Activated B cell treated with CpG ODN at 0.5 μM for 24 hours (primary cell): ENCODE measurements at regions of chr12 and their contacts with region 1.

Region 1: GRCh38 chr12:76763743-76764675 is at the start of gene ZDHHC17:
- DNase-seq: peak; percentile 96
- ATAC-seq: peak; percentile 87
- H3K4me3 Mint-ChIP-seq: peak within 1 kb of the TSS; percentile 97
- H3K27ac Mint-ChIP-seq: peak within 1 kb of the TSS; percentile 96
- H3K4me1 Mint-ChIP-seq: peaks cover 44% of the 10 kb centered on the region
- H3K27me3 Mint-ChIP-seq: no peaks in the 10 kb centered on the region
- CTCF ChIP-seq: no peak
- total RNA-seq, gene ZDHHC17: 51.8 and 70.8 TPM in 2 replicates

Region 2: GRCh38 chr12:75480469-75480949 is 1283.5 kb before region 1 on chr12 and contains the start of gene GLIPR1:
- CTCF ChIA-PET with region 1: no interaction called
- POLR2A ChIA-PET with region 1: interaction called, 3 read pairs
- intact Hi-C with region 1: loop called (anchors 5 kb)
- DNase-seq: peak; percentile 40
- ATAC-seq: peak; percentile 79
- H3K4me3 Mint-ChIP-seq: peak within 1 kb of the TSS; percentile 96
- H3K27ac Mint-ChIP-seq: peak within 1 kb of the TSS; percentile 97
- H3K4me1 Mint-ChIP-seq: peaks cover 96% of the 10 kb centered on the region
- H3K27me3 Mint-ChIP-seq: no peaks in the 10 kb centered on the region
- CTCF ChIP-seq: no peak
- total RNA-seq, gene GLIPR1: 44.7 and 45.4 TPM in 2 replicates

Region 3: DNA sequence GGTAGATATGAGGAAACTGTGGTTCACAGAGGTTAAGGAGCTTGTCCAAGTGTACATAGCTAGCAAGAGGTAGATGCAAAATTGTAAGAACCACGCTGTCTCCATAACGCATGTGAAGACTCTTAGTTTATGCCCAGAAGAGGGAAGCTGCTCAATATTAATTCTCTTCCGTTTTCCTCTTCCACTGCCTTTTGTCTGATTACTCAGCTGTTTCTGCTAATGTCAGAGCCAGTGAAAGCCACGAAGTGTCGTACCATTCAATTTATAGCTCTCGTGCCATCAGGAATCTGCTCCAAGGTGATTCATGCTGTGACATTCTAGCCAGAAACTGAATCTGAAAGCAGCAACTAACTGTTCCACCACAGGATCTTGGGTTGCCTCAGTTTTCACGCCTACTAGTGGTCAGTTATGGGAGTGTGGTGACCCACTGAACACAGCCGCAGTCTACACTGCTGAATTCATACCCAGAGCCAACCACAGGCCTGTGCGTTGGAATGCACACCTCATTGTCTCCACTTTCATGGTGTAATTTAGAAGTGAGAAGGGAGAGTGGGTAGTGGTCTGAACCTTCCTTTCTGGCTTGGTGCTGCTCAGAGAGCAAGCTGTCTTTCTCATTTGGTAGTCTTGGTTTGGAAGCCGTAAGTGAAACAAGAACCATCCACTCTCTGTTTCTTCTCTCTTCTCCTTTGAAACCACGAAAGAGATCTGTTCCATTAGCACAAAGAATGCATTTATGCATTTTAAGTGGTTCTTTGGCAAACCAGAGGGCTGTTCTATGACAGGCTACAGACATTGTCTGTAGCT is 605.3 kb before region 1 on chr12:
- CTCF ChIA-PET with region 1: no interaction called
- POLR2A ChIA-PET with region 1: interaction called, 3 read pairs
- intact Hi-C with region 1: loop called (anchors 10 kb)
- DNase-seq: peak; percentile 33
- ATAC-seq: peak; percentile 99
- H3K4me3 Mint-ChIP-seq: peak overlapping the region; percentile 82
- H3K27ac Mint-ChIP-seq: peak overlapping the region; percentile 88
- H3K4me1 Mint-ChIP-seq: peaks cover 20% of the 10 kb centered on the region
- H3K27me3 Mint-ChIP-seq: no peaks in the 10 kb centered on the region
- CTCF ChIP-seq: no peak

Region 4: DNA sequence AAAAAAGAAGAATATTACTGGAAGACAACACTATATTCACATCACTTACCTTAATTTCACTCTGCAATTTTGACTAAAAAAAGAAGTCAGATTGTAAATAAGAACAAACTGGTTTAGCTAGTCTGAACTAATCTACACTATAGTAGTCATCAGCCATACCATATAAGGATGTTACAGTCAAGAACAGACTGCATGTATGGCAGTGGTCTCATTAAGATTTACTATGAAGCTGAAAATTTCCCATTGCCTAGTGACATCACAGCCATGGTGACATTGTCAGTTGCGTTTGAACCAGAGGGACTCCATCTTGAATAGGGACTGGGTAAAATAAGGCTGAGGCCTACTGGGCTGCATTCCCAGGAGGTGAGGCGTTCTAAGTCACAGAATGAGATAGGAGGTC is 255.8 kb before region 1 on chr12:
- CTCF ChIA-PET with region 1: no interaction called
- POLR2A ChIA-PET with region 1: interaction called, 5 read pairs
- intact Hi-C with region 1: loop called (anchors 1 kb)
- DNase-seq: no peak
- ATAC-seq: no peak
- H3K4me3 Mint-ChIP-seq: no peak overlapping the region
- H3K27ac Mint-ChIP-seq: no peak overlapping the region
- H3K4me1 Mint-ChIP-seq: peaks cover 48% of the 10 kb centered on the region
- H3K27me3 Mint-ChIP-seq: no peaks in the 10 kb centered on the region
- CTCF ChIP-seq: no peak

Region 5: DNA sequence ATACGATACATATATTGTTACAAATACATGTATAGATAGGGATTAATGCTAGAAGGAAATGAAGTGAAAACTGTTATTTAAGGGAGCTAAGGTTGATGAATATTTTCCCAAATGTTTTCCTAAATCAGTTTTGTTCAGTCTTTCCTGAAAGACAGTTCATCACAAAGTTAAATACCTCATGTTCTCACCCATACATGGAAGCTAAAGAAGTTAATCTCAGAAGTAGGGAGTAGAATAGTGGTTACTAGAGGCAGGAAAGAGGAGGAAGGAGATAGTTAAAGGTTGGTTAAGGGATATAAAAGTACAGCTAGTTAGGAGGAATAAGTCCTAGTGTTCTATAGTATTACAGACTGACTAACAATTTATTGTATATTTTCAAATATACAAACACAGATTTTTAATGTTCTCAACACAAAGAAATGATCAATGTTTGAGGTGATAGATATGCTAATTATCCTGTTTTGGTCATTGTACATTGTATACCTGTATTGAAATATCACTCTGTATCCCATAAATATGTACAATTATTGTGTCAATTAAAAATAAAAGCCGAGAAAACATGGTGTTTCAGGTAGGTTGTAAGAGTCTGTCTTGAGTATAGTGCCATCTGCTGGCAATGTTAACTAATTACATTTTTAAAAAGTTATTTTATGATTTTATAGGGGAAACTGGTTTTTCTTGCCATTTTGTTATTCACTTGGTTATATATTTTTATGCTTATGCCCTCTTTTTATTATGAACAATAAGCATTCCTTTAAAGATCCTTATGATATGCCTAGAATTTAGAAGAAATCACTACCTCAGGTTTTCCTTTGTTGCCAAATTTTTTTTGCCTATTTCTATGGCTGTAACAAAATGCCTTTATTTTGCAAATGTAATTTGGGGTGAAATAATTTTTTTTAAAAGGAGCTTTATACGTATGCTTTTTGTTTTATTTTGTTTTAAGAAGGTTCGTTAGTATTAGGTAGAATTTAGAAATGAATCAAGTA is 26.8 kb after region 1 on chr12:
- CTCF ChIA-PET with region 1: interaction called, 8 read pairs
- POLR2A ChIA-PET with region 1: no interaction called
- intact Hi-C with region 1: loop called (anchors 1 kb)
- DNase-seq: no peak
- ATAC-seq: no peak
- H3K4me3 Mint-ChIP-seq: no peak overlapping the region
- H3K27ac Mint-ChIP-seq: no peak overlapping the region
- H3K4me1 Mint-ChIP-seq: peaks cover 35% of the 10 kb centered on the region
- H3K27me3 Mint-ChIP-seq: no peaks in the 10 kb centered on the region
- CTCF ChIP-seq: no peak

Region 6: GRCh38 chr12:76810671-76811419 is 46.8 kb after region 1 on chr12:
- CTCF ChIA-PET with region 1: no interaction called
- POLR2A ChIA-PET with region 1: no interaction called
- intact Hi-C with region 1: no loop called
- DNase-seq: no peak
- ATAC-seq: no peak
- H3K4me3 Mint-ChIP-seq: no peak overlapping the region
- H3K27ac Mint-ChIP-seq: no peak overlapping the region
- H3K4me1 Mint-ChIP-seq: peaks cover 2% of the 10 kb centered on the region
- H3K27me3 Mint-ChIP-seq: no peaks in the 10 kb centered on the region
- CTCF ChIP-seq: no peak

Region 7: DNA sequence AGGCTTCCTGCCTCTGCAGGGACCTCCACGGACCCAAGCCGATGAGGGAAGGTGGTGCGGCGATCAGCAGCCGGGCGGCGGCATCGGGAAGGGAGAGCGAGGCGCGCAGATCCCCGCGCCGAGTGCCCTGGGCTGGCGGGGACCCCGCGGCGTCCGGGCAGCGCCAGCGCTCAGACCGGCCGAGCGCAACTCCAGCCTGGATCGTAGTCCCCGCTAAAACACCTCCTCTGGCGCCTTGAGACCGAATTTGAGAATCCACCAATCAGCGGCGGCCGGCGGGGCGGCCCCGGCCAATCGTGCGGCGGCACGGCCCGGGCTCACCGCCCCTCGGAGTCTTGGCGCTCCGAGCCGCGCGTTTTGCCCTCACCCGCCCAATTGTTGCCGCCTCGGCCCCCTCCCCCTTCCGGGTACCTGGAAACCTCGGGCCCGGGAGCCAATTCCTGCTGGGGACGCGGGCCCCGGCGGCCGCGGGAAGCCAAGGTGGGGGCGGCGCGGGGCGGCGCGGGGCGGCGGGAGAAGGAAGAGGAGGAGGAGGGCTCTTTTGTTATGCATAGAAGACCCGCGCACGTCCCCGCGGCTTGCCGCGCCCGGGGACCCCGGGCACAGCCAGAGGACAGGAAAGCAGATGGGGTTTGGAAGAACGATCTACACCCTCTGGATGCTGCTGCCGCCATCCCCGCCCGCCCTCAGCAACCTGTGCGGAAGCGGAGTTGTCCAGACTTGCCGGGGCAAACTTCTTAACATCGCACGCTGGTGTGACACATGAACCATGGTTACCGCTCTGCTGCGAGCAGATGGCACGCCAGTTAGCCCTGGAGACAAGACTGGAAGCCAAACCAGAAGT is 301.6 kb after region 1 on chr12 and contains the start of gene E2F7:
- CTCF ChIA-PET with region 1: no interaction called
- POLR2A ChIA-PET with region 1: no interaction called
- intact Hi-C with region 1: loop called (anchors 5 kb)
- DNase-seq: peak; percentile 81
- ATAC-seq: peak; percentile 86
- H3K4me3 Mint-ChIP-seq: peak within 1 kb of the TSS; percentile 90
- H3K27ac Mint-ChIP-seq: no peak within 1 kb of the TSS
- H3K4me1 Mint-ChIP-seq: peaks cover 36% of the 10 kb centered on the region
- H3K27me3 Mint-ChIP-seq: peaks cover 5% of the 10 kb centered on the region
- CTCF ChIP-seq: no peak
- total RNA-seq, gene E2F7: 0.71 and 0.95 TPM in 2 replicates